AG04449 (cell line): ENCODE measurements at regions of chr12 and their contacts with region 1.

Region 1: DNA sequence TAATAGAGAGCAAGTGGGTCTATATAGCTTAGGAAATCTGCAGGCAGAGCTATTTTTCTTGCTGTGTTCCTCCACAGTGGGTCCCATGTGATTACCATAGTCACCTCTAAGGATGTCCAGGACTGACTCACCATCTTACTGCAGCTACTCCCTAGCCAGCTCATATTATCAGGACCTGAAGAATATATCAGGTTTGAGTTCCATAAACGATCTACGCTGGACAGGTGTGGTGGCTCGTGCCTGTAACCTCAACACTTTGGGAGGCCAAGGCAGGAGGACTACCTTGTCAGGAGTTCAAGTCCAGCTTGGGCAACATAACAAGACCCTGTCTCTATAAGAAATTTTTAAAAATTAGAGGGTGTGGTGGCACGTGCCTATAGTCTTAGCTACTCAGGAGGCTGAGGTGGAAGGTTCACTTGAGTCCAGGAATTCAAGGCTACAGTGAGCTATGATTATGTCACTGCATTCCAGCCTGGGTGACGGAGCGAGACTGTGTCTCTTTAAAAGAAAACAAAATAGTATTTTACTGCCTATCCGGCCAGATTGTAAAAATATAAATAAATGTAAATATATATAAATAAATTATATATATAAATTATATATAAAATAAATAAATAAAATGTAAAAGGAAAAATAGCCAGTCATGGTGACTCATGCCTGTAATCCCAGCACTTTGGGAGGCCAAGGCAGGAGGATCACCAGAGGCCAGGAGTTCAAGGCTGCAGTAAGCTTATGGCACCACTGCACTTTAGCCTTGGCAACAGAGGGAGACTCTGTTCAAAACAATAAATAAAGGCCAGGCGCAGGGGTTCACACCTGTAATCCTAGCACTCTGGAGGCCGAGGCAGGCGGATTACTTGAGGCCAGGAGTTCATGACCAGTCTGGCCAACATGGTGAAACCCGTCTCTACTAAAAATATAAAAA is 6.9 kb upstream of the SPRYD4 start:
- DNase-seq: no peak
- H3K4me3 ChIP-seq: no peak overlapping the region
- CTCF ChIP-seq: no peak

Region 2: GRCh38 chr12:56258057-56258819 is 203.3 kb before region 1 on chr12 and contains the start of gene ANKRD52:
- CTCF ChIA-PET with region 1: interaction called, 26 read pairs
- POLR2A ChIA-PET with region 1: interaction called, 3 read pairs
- DNase-seq: no peak
- H3K4me3 ChIP-seq: peak within 1 kb of the TSS; percentile 80
- CTCF ChIP-seq: peak; percentile 72

Region 3: GRCh38 chr12:56315622-56316473 is 145.6 kb before region 1 on chr12 and contains the start of gene CNPY2:
- CTCF ChIA-PET with region 1: interaction called, 24 read pairs
- POLR2A ChIA-PET with region 1: interaction called, 7 read pairs
- DNase-seq: peak; percentile 77
- H3K4me3 ChIP-seq: peak within 1 kb of the TSS; percentile 96
- CTCF ChIP-seq: peak; percentile 14

Region 4: GRCh38 chr12:56359851-56360767 is 101.4 kb before region 1 on chr12 and contains the start of gene STAT2:
- CTCF ChIA-PET with region 1: interaction called, 68 read pairs
- POLR2A ChIA-PET with region 1: interaction called, 3 read pairs
- DNase-seq: peak; percentile 99
- H3K4me3 ChIP-seq: peak within 1 kb of the TSS; percentile 90
- CTCF ChIP-seq: no peak

Region 5: DNA sequence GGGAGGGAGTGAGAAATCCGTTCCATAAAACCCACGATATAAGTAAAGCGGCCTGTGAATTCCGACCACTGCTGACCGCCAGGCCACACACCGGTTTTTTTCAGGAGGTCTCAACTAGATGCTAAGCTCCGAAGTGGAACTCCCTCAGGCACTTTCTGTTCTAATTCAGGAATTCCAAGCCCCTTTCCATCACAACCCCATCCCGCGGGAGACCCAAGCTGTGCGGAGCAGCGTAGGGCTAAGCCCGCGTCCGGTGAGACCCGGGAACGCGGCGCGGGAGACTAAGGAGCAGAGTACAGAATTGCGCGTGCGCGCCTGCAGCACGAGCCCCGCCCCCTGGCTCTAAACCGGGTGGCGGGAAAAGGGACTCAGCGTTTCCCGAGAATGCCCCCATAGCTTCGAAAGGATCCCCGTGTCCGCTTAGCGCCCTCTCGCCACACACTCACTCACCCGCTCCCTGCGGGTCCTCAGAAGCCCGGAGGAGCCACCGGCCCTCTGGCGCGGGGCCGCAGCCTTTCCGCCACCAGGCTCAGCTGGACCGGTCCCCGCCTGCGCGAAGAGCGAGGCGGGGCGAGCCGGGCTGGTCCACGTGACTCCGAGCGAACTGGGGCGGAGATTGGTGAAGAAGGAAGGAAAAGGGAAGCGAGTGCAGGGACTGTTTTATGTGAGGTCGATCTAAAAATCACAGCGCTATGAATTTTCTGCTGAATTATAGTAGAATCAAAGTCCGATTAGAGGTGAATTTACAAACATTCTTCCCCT is 12.5 kb before region 1 on chr12 and contains the start of gene TIMELESS:
- CTCF ChIA-PET with region 1: interaction called, 100 read pairs
- POLR2A ChIA-PET with region 1: no interaction called
- DNase-seq: peak; percentile 17
- H3K4me3 ChIP-seq: peak within 1 kb of the TSS; percentile 80
- CTCF ChIP-seq: no peak

Region 6: DNA sequence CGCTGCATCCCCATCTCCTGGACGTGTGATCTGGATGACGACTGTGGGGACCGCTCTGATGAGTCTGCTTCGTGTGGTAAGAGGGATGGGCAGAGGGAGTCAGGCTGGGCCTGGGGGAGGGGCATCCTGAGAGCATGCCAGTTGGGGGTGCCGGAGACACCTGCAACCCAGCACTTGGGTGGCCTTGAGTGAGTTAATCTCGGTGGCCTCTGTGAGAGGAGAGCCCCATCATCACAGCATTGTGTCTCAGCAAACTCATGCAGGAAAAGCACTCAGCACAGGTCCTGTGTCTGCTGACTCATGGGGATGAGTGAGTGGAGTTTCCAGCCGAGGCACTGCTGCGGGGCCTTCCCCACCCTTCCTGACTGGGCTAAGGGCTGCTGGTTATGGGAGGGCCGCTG is 705.5 kb after region 1 on chr12:
- CTCF ChIA-PET with region 1: no interaction called
- POLR2A ChIA-PET with region 1: no interaction called
- DNase-seq: no peak
- H3K4me3 ChIP-seq: no peak overlapping the region
- CTCF ChIP-seq: no peak